PC-9 (cell line): ENCODE measurements at regions of chr4 and their contacts with region 1.

Region 1: DNA sequence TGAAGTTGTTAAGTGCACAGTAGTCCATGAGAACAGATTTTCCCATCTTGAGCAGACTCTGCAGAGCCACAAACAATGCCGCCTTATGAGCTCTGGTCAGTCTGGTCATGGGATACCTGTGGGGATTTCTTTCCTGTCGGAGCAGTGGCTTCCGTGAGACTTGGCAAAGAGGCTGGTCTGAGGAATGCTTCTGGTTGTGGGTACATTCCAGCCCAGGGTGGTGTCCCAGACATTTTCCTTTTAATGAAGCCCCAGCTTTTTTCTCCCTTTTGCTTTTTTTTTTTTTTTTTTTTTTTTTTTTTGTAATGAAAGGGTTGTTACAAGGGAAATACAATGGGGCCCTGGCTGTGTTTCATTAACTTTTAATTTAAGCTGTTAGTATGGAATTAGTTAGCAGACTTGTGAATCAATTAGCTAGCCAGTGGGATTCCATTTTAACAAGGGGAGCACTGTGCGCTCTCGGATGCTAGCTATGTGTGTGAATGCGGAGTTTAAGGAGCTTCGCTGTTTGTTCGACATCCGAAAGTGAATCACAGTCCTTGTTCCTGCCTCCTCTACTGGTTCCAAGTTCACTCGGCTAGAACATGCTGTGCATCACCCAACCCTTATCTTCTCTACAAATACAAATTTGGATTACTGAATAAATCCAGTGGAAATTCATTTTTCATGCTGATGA is 225.1 kb downstream of the CBR4 start:
- DNase-seq: peak in 1 of 2 experiments; percentile 81
- H3K4me3 ChIP-seq: no peak overlapping the region
- H3K27ac ChIP-seq: no peak overlapping the region
- H3K4me1 ChIP-seq: no peaks in the 10 kb centered on the region
- H3K27me3 ChIP-seq: no peaks in the 10 kb centered on the region
- CTCF ChIP-seq: no peak

Region 2: DNA sequence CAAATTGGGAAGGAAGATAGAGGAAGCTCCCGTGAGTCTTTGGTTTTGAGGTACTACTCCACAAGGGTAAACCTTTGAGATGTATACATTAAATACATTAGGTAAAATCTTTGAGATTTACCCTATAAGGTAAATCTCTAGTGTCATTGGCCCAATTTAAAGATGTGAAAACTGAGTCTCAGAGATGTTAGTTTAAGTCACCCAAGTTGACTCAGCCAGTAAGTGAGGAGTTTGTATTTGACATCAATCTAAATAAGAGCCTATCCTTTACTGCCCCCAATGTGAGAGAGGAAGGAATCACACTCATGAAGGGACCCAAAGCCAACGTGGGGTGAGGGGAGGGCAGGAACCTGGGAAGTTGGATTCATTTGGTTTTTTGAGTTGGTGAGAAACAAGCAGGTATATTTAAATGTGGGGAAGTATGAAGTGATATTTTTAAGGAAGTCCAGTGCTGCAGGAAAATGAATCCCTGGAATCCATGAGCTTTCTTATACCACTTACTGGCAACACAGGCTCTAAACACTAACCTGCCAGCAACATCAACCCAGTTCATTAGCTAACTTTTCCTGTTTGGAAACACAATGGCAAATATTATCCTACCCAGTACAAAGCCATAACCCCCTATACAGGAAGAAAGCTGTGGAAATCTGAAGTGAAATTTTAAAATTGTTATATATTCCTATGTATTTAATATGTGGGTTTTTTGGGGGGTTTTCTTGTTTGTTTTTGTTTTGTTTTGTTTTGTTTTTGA is 232.8 kb before region 1 on chr4:
- CTCF ChIA-PET with region 1: no interaction called
- POLR2A ChIA-PET with region 1: interaction called, 32 read pairs
- intact Hi-C with region 1: no loop called
- DNase-seq: no peak
- H3K4me3 ChIP-seq: no peak overlapping the region
- H3K27ac ChIP-seq: peak overlapping the region; percentile 51
- H3K4me1 ChIP-seq: peaks cover 13% of the 10 kb centered on the region; the same call in 1 of the 2 replicates
- H3K27me3 ChIP-seq: no peaks in the 10 kb centered on the region
- CTCF ChIP-seq: no peak

Region 3: GRCh38 chr4:168643111-168643795 is 141.7 kb before region 1 on chr4:
- CTCF ChIA-PET with region 1: no interaction called
- POLR2A ChIA-PET with region 1: interaction called, 22 read pairs
- intact Hi-C with region 1: loop called (anchors 10 kb)
- DNase-seq: no peak
- H3K4me3 ChIP-seq: no peak overlapping the region
- H3K27ac ChIP-seq: no peak overlapping the region
- H3K4me1 ChIP-seq: peaks cover 1% of the 10 kb centered on the region; the same call in 1 of the 2 replicates
- H3K27me3 ChIP-seq: no peaks in the 10 kb centered on the region
- CTCF ChIP-seq: no peak

Region 4: GRCh38 chr4:168815379-168816345 is 30.7 kb after region 1 on chr4:
- CTCF ChIA-PET with region 1: no interaction called
- POLR2A ChIA-PET with region 1: interaction called, 4 read pairs
- intact Hi-C with region 1: loop called (anchors 1 kb)
- DNase-seq: no peak
- H3K4me3 ChIP-seq: no peak overlapping the region
- H3K27ac ChIP-seq: no peak overlapping the region
- H3K4me1 ChIP-seq: 0 out of 2 replicates have a peak, but pooled peaks cover 3% of the 10 kb centered on the region
- H3K27me3 ChIP-seq: no peaks in the 10 kb centered on the region
- CTCF ChIP-seq: no peak